CD4-positive, alpha-beta T cell (primary cell): ENCODE measurements at regions of chr11 and their contacts with region 1.

Region 1: DNA sequence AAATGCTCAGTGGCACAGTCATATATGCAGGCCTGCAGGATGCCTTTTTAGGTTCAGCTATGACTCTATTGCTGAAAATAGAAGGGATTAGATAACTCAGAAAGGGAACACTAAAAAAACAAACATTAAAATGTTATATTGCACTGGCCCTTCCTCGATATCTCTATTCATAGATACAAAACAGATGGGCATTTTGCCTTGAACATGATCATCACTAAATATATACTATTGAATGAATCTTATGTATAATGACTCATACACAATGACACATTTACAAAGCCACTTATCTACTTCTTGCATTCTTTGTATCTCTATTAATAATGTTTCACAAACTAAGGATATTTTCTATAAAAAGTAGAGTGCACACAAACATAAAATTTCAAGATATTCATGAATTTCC is 2352.8 kb upstream of the RAG2 start:
- DNase-seq: no peak
- ATAC-seq: no peak
- H3K4me3 ChIP-seq: no peak overlapping the region
- H3K4me3 Mint-ChIP-seq: no peak overlapping the region
- H3K27ac ChIP-seq: no peak overlapping the region
- H3K27ac Mint-ChIP-seq: no peak overlapping the region
- H3K4me1 ChIP-seq: no peaks in the 10 kb centered on the region
- H3K4me1 Mint-ChIP-seq: no peaks in the 10 kb centered on the region
- H3K27me3 ChIP-seq: no peaks in the 10 kb centered on the region
- H3K27me3 Mint-ChIP-seq: no peaks in the 10 kb centered on the region
- CTCF ChIP-seq: no peak

Region 2: DNA sequence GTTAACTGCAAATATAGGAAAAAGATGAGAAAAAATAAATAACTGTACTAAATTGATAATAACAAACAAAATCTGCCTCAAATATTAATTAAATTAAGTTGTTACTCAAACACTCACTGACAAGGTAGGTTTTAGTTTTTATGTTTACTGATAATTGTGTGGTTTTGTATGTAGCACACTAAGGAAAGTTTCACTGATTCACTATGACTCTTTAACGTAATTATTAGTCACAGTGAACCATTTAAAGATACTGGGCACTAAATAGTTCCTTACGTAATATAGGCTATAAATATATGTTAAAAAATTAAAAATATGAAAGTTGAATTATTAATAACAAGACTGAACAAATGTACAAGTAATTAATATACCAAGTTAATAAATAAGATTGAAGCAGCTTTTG is 22.9 kb before region 1 on chr11:
- CTCF ChIA-PET with region 1: no interaction called
- POLR2A ChIA-PET with region 1: no interaction called
- intact Hi-C with region 1: loop called in 1 of 2 experiments (anchors 2 kb)
- DNase-seq: no peak
- ATAC-seq: no peak
- H3K4me3 ChIP-seq: no peak overlapping the region
- H3K4me3 Mint-ChIP-seq: no peak overlapping the region
- H3K27ac ChIP-seq: no peak overlapping the region
- H3K27ac Mint-ChIP-seq: no peak overlapping the region
- H3K4me1 ChIP-seq: no peaks in the 10 kb centered on the region
- H3K4me1 Mint-ChIP-seq: no peaks in the 10 kb centered on the region
- H3K27me3 ChIP-seq: no peaks in the 10 kb centered on the region
- H3K27me3 Mint-ChIP-seq: no peaks in the 10 kb centered on the region
- CTCF ChIP-seq: no peak

Region 3: DNA sequence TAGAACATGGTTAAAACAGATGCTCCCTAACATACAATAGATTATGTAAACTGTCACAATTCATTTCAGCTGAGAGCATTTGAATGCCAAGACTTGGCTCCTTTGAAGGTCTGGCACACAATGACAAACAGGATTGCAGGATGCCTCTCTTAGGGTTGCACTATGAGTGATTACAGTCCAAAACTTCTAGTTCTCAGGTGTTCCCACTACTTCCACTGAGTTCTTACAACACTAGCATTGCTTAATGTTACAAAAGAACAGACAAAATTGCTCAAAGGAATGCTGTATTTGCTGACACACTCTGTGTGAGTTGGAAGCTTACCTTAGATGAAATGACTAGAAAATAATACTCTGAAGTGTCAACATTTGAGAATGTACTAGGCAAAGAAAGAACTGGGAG is 60.9 kb after region 1 on chr11:
- CTCF ChIA-PET with region 1: no interaction called
- POLR2A ChIA-PET with region 1: no interaction called
- intact Hi-C with region 1: loop called in 1 of 2 experiments (anchors 10 kb)
- DNase-seq: no peak
- ATAC-seq: no peak
- H3K4me3 ChIP-seq: no peak overlapping the region
- H3K4me3 Mint-ChIP-seq: no peak overlapping the region
- H3K27ac ChIP-seq: no peak overlapping the region
- H3K27ac Mint-ChIP-seq: no peak overlapping the region
- H3K4me1 ChIP-seq: no peaks in the 10 kb centered on the region
- H3K4me1 Mint-ChIP-seq: no peaks in the 10 kb centered on the region
- H3K27me3 ChIP-seq: no peaks in the 10 kb centered on the region
- H3K27me3 Mint-ChIP-seq: no peaks in the 10 kb centered on the region
- CTCF ChIP-seq: no peak